Caco-2 (cell line): ENCODE measurements at regions of chr9 and their contacts with region 1.

Region 1: GRCh38 chr9:83199243-83199642 is 136.3 kb upstream of the RASEF start:
- DNase-seq: peak; percentile 30 to 33
- H3K4me3 ChIP-seq: no peak overlapping the region
- H3K4me3 Mint-ChIP-seq: no peak overlapping the region
- H3K27ac Mint-ChIP-seq: peak overlapping the region; percentile 55
- H3K4me1 ChIP-seq: no peaks in the 10 kb centered on the region
- H3K4me1 Mint-ChIP-seq: no peaks in the 10 kb centered on the region
- H3K27me3 ChIP-seq: no peaks in the 10 kb centered on the region
- H3K27me3 Mint-ChIP-seq: peaks cover 6% of the 10 kb centered on the region
- CTCF ChIP-seq: peak in 1 of 2 experiments; percentile 56

Region 2: GRCh38 chr9:83167168-83167567 is 32.1 kb before region 1 on chr9:
- CTCF ChIA-PET with region 1: no interaction called
- POLR2A ChIA-PET with region 1: no interaction called
- intact Hi-C with region 1: no loop called
- DNase-seq: no peak
- H3K4me3 ChIP-seq: no peak overlapping the region
- H3K4me3 Mint-ChIP-seq: no peak overlapping the region
- H3K27ac Mint-ChIP-seq: no peak overlapping the region
- H3K4me1 ChIP-seq: no peaks in the 10 kb centered on the region
- H3K4me1 Mint-ChIP-seq: no peaks in the 10 kb centered on the region
- H3K27me3 ChIP-seq: no peaks in the 10 kb centered on the region
- H3K27me3 Mint-ChIP-seq: no peaks in the 10 kb centered on the region
- CTCF ChIP-seq: no peak

Region 3: DNA sequence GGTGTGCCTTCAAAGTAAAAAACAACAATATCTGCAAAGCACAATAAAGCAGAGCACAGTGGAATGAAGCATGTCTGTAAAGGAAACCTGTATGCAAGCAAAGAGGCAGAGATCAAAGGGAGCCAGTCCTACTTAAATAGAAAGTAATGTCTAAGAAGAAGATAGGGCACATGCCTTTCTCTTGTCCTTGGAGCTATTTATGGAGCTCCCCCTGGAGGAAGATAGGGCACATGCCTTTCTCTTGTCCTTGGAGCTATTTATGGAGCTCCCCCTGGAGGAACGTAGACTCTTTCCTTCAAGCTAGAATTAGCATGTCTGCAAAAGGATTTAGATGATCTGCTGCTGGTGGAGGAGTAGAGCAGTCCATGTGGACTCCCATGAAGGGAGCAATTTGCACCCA is 31.8 kb after region 1 on chr9:
- CTCF ChIA-PET with region 1: no interaction called
- POLR2A ChIA-PET with region 1: no interaction called
- intact Hi-C with region 1: loop called (anchors 1 kb)
- DNase-seq: peak in 1 of 2 experiments; percentile 5
- H3K4me3 ChIP-seq: no peak overlapping the region
- H3K4me3 Mint-ChIP-seq: no peak overlapping the region
- H3K27ac Mint-ChIP-seq: no peak overlapping the region
- H3K4me1 ChIP-seq: no peaks in the 10 kb centered on the region
- H3K4me1 Mint-ChIP-seq: no peaks in the 10 kb centered on the region
- H3K27me3 ChIP-seq: no peaks in the 10 kb centered on the region
- H3K27me3 Mint-ChIP-seq: no peaks in the 10 kb centered on the region
- CTCF ChIP-seq: no peak